Activated CD4-positive, alpha-beta memory T cell treated with anti-CD3 and anti-CD28 coated beads for 36 hours (primary cell): ENCODE measurements at regions of chr12 and their contacts with region 1.

Region 1: DNA sequence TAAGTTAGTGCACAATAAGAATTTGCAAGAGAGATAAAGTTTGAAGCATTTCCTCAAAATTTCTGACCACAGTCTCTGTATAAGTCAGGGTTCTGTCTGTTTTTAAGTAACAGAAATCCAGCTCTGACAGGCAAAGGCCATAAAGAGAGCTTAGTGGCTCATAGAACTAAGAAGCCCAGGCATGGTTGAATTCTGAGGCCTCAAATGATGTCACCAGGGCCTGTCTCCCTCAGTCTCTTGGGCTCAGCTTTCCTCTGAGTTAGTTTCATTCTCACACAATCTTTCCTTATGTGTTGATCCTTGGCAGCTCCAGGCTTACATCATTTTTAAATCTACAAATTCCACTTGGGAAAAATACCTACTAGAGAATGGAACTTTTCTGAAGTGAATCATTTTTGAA is 173.4 kb upstream of the ATP2B1 start:
- DNase-seq: peak; percentile 65
- H3K4me3 Mint-ChIP-seq: no peak overlapping the region
- H3K27ac Mint-ChIP-seq: peak overlapping the region; percentile 70
- H3K4me1 Mint-ChIP-seq: peaks cover 40% of the 10 kb centered on the region
- H3K27me3 Mint-ChIP-seq: no peaks in the 10 kb centered on the region

Region 2: GRCh38 chr12:89671469-89671868 is 210.6 kb before region 1 on chr12:
- CTCF ChIA-PET with region 1: no interaction called
- POLR2A ChIA-PET with region 1: no interaction called
- intact Hi-C with region 1: loop called (anchors 2 kb)
- DNase-seq: no peak
- H3K4me3 Mint-ChIP-seq: no peak overlapping the region
- H3K27ac Mint-ChIP-seq: peak overlapping the region; percentile 6
- H3K4me1 Mint-ChIP-seq: peaks cover 82% of the 10 kb centered on the region
- H3K27me3 Mint-ChIP-seq: no peaks in the 10 kb centered on the region

Region 3: GRCh38 chr12:89862511-89863179 is 19.4 kb before region 1 on chr12:
- CTCF ChIA-PET with region 1: no interaction called
- POLR2A ChIA-PET with region 1: no interaction called
- intact Hi-C with region 1: loop called (anchors 1 kb)
- DNase-seq: peak; percentile 57
- H3K4me3 Mint-ChIP-seq: peak overlapping the region; percentile 66
- H3K27ac Mint-ChIP-seq: peak overlapping the region; percentile 95
- H3K4me1 Mint-ChIP-seq: peaks cover 67% of the 10 kb centered on the region
- H3K27me3 Mint-ChIP-seq: no peaks in the 10 kb centered on the region

Region 4: GRCh38 chr12:89949457-89950195 is 67.6 kb after region 1 on chr12:
- CTCF ChIA-PET with region 1: no interaction called
- POLR2A ChIA-PET with region 1: no interaction called
- intact Hi-C with region 1: loop called (anchors 2 kb)
- DNase-seq: peak; percentile 60
- H3K4me3 Mint-ChIP-seq: peak overlapping the region; percentile 4
- H3K27ac Mint-ChIP-seq: peak overlapping the region; percentile 26
- H3K4me1 Mint-ChIP-seq: peaks cover 51% of the 10 kb centered on the region
- H3K27me3 Mint-ChIP-seq: no peaks in the 10 kb centered on the region

Region 5: DNA sequence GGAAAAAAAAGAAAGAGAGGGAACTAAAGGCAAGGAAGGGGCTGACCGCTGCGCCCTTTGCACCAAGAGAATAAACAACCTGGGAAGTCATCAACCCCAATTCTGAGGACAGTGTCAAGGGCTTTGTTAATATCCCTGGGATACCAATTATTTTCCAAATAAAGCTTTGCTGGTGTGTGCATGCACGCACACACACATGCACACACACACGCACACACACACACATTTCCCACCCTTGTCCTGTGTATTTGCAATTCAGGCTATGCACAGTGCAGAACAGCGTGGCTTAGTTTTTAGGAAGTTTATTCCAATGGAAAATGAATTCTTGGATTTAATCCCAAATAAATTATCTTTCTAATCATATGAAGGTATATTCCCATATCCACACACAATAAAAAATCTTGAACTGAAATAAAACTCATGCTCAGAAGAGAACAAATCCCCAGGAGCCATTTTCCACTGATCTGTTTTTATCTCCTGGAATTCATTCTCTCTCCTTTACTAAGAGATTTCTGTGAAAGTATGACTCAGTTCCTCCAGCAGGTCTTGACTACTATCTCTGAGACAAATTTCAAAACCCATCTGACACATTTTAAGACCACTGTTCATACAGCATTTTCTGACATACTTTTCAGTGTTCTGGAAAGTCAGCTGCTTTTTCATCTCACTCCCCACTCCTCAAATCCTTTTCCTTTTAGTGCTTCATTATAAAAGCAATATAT is 161.0 kb after region 1 on chr12:
- CTCF ChIA-PET with region 1: no interaction called
- POLR2A ChIA-PET with region 1: no interaction called
- intact Hi-C with region 1: loop called (anchors 1 kb)
- DNase-seq: no peak
- H3K4me3 Mint-ChIP-seq: no peak overlapping the region
- H3K27ac Mint-ChIP-seq: no peak overlapping the region
- H3K4me1 Mint-ChIP-seq: peaks cover 9% of the 10 kb centered on the region
- H3K27me3 Mint-ChIP-seq: no peaks in the 10 kb centered on the region

Region 6: DNA sequence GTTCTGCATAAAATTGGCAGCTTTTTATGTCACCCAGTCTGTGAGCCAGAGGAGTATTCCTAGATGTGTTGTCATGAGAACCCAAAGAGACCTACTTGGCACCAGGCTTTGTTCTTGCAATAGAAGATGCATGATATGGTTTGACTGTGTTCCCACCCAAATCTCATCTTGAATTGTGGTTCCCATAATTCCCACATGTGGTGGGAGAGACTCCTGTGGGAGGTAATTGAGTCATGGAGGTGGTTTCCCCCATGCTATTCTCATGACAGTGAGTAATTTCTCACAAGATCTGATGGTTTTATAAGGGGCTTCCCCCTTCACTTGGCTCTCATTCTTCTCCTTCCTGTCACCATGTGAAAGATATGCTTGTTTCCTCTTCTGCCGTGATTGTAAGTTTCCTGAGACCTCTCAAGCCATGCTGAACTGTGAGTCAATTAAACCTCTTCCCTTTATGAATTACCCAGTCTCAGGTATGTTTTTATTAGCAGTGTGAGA is 398.6 kb after region 1 on chr12:
- CTCF ChIA-PET with region 1: no interaction called
- POLR2A ChIA-PET with region 1: no interaction called
- intact Hi-C with region 1: loop called (anchors 5 kb)
- DNase-seq: peak; percentile 37
- H3K4me3 Mint-ChIP-seq: no peak overlapping the region
- H3K27ac Mint-ChIP-seq: peak overlapping the region; percentile 13
- H3K4me1 Mint-ChIP-seq: peaks cover 16% of the 10 kb centered on the region
- H3K27me3 Mint-ChIP-seq: peaks cover 5% of the 10 kb centered on the region